ENCODE measurements at regions of chr2 and their contacts with region 1.

Region 1: DNA sequence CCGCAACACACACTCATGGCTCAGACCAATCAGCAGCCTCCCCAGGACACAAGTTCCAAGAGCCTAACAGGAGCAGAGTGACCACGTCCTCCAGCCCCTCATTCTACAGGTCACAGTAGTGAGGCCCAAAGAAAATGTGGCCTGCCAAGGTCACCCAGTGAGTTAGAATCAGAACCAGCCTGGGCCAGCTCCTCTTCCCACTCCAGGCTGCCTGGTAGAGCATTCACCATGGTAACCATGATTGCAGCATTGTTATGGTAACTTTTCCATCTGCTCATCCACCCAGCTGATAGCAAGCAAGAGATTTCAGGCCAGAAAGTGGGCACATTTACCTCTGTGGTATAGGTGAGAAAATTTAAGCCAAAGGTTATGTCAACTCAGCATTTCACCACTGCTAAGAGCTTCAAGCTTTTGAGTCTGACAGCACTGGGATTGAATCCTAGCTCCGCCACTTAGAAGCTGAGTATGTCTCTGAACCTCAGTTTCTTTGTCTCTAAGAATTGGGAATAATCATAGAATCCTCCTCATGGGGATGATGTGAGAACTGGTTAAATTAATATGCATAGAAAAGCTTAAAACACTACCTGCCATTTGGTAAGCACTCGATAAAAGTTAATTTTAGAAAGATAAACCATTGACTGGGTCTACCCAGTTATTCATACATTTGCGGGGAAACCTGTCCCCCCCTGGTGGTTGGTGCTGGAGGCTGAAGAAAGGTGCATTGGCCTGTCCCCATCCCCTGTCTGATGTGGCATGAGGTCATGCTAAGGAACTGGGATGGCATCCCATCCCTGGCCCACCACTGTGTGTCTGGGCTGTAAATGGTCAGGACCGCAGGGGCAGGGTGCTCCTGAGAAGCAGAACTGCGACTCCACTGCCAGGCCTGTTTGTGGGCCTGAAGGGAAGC is 181.5 kb downstream of the KLHL29 start:
- DNase-seq: peak in 5 of 9 experiments; percentile 10 to 53 (median 24)
- ATAC-seq: no peak
- H3K4me3 ChIP-seq: no peak overlapping the region
- H3K4me3 Mint-ChIP-seq: no peak overlapping the region
- H3K27ac ChIP-seq: no peak overlapping the region
- H3K27ac Mint-ChIP-seq: no peak overlapping the region
- H3K4me1 ChIP-seq: no peaks in the 10 kb centered on the region
- H3K4me1 Mint-ChIP-seq: no peaks in the 10 kb centered on the region
- H3K27me3 ChIP-seq: no peaks in the 10 kb centered on the region
- H3K27me3 Mint-ChIP-seq: no peaks in the 10 kb centered on the region
- CTCF ChIP-seq: no peak

Region 2: DNA sequence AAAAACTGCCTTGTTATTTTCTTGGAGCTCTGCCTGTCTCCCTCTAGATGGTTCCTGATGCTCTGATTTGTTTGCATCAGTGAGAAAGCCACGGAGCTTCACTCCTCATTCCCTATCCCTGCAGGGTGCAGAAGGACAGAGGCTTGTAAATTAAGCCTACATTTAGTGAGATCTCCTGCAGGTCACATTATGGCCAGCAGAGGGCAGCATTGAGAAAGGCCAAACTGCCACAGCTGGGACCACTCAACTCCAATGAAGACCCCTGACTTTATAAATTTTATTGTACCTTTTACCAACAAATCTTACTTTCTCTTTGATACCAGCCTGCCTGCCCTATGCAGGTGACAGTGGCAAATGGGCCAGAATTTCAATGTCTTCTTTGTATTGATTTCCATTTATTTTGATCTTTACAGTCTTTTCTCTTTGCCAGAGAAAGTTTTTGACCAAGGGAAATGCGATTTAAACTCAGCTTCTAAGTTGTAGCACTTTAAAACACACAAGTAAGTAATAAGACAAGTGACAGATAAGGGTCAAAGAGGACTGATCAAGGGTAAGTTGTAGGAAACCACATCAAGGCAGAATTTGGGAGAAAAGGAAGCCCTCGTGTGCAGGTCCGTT is 1210.6 kb before region 1 on chr2:
- CTCF ChIA-PET with region 1: no interaction called
- POLR2A ChIA-PET with region 1: no interaction called
- intact Hi-C with region 1: loop called in 1 of 2 experiments (anchors 10 kb)
- DNase-seq: peak in 8 of 9 experiments; percentile 4 to 49 (median 21)
- ATAC-seq: no peak
- H3K4me3 ChIP-seq: no peak overlapping the region
- H3K4me3 Mint-ChIP-seq: no peak overlapping the region
- H3K27ac ChIP-seq: no peak overlapping the region
- H3K27ac Mint-ChIP-seq: no peak overlapping the region
- H3K4me1 ChIP-seq: no peaks in the 10 kb centered on the region
- H3K4me1 Mint-ChIP-seq: no peaks in the 10 kb centered on the region
- H3K27me3 ChIP-seq: no peaks in the 10 kb centered on the region
- H3K27me3 Mint-ChIP-seq: no peaks in the 10 kb centered on the region
- CTCF ChIP-seq: no peak

Region 3: DNA sequence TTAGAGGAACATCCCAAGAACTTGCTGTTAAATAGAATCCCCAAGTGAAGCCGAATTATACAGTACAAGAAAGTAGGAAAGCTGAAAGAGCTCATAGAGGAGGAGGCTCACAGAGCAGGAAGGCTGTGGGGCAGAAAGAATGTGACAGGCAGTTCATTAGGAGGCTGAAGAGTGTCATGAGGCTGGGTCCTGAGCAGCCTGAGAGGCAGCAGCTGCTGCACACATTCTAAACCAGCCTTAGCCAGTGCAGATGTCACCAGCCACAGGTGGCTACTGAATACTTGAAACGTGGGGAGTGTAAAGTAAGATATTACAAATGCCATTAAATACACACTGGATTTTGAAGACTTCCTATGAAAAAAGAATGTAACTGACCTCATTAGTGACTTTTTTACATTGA is 671.7 kb before region 1 on chr2:
- CTCF ChIA-PET with region 1: no interaction called
- POLR2A ChIA-PET with region 1: no interaction called
- intact Hi-C with region 1: no loop called
- DNase-seq: no peak
- ATAC-seq: no peak
- H3K4me3 ChIP-seq: no peak overlapping the region
- H3K4me3 Mint-ChIP-seq: no peak overlapping the region
- H3K27ac ChIP-seq: no peak overlapping the region
- H3K27ac Mint-ChIP-seq: no peak overlapping the region
- H3K4me1 ChIP-seq: no peaks in the 10 kb centered on the region
- H3K4me1 Mint-ChIP-seq: no peaks in the 10 kb centered on the region
- H3K27me3 ChIP-seq: no peaks in the 10 kb centered on the region
- H3K27me3 Mint-ChIP-seq: no peaks in the 10 kb centered on the region
- CTCF ChIP-seq: no peak

Region 4: GRCh38 chr2:25420820-25421237 is 1854.3 kb after region 1 on chr2:
- CTCF ChIA-PET with region 1: no interaction called
- POLR2A ChIA-PET with region 1: no interaction called
- intact Hi-C with region 1: no loop called
- DNase-seq: no peak
- ATAC-seq: no peak
- H3K4me3 ChIP-seq: no peak overlapping the region
- H3K4me3 Mint-ChIP-seq: no peak overlapping the region
- H3K27ac ChIP-seq: no peak overlapping the region
- H3K27ac Mint-ChIP-seq: no peak overlapping the region
- H3K4me1 ChIP-seq: no peaks in the 10 kb centered on the region
- H3K4me1 Mint-ChIP-seq: no peaks in the 10 kb centered on the region
- H3K27me3 ChIP-seq: no peaks in the 10 kb centered on the region
- H3K27me3 Mint-ChIP-seq: no peaks in the 10 kb centered on the region
- CTCF ChIP-seq: no peak